Naive thymus-derived CD4-positive, alpha-beta T cell (primary cell): ENCODE measurements at regions of chr6 and their contacts with region 1.

Region 1: DNA sequence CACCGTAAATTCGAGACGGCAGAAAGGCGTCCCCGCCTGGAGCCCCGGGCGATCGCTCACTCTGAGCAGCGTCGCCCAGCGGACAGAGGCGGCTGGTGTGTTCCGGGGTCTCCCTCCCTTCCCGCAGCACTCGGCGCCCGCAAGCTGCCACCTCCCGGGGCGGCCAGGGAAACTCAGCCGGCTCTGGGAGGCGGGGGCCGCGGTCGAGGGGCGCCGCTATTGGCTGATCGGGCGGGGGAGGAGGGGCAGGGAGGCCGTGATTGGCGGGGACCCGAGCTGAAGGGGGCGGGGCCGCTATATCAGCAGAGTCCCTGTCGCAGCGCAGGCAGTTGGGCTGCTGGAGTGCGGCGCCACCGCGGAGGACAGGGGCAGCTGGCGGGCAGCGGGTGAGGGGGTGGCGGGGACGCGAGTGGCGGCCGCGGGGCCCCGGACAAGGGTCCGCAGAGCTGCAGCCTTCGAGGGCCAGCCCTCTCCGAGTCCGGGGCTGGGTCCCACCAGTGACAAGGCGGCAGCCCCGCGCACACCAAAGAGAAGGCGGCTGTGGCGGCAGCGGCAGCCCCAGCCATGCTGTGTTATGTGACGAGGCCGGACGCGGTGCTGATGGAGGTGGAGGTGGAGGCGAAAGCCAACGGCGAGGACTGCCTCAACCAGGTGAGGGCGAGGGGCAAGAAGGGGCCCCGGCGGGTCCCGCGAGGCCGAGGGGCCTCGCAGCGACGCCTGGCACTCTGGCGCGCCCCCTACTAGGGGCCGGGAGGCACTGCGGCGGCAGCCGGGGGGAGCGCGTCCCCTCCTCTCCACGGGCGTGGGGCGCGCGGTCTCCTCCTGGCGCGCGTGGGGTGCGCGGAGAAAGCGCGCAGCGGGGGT is at the start of gene MYLIP:
- DNase-seq: peak; percentile 93 to 97 (median 96)
- ATAC-seq: peak; percentile 93
- H3K4me3 ChIP-seq: peak within 1 kb of the TSS; percentile 91
- H3K4me3 Mint-ChIP-seq: peak within 1 kb of the TSS; percentile 93 to 100 (median 96)
- H3K27ac ChIP-seq: peak within 1 kb of the TSS; percentile 97
- H3K27ac Mint-ChIP-seq: peak within 1 kb of the TSS; percentile 76 to 98 (median 95)
- H3K4me1 ChIP-seq: peaks cover 30 to 39% of the 10 kb centered on the region in 2 donors
- H3K4me1 Mint-ChIP-seq: peaks cover 20 to 50% (median 35%) of the 10 kb centered on the region in 7 donors
- H3K27me3 ChIP-seq: no peaks in the 10 kb centered on the region
- H3K27me3 Mint-ChIP-seq: peaks cover 0 to 25% (median 0%) of the 10 kb centered on the region in 5 donors
- total RNA-seq, gene MYLIP: 17.8 to 215 (median 23.0) TPM

Region 2: GRCh38 chr6:15662326-15663129 is 466.5 kb before region 1 on chr6 and contains the start of gene DTNBP1:
- CTCF ChIA-PET with region 1: no interaction called
- POLR2A ChIA-PET with region 1: no interaction called
- intact Hi-C with region 1: loop called (anchors 1 to 2 kb)
- DNase-seq: peak; percentile 74 to 93 (median 84)
- ATAC-seq: peak; percentile 90
- H3K4me3 ChIP-seq: peak within 1 kb of the TSS; percentile 82
- H3K4me3 Mint-ChIP-seq: peak within 1 kb of the TSS; percentile 75 to 93 (median 88)
- H3K27ac ChIP-seq: peak within 1 kb of the TSS; percentile 71
- H3K27ac Mint-ChIP-seq: peak within 1 kb of the TSS; percentile 71 to 90 (median 82)
- H3K4me1 ChIP-seq: peaks cover 11 to 20% of the 10 kb centered on the region in 2 donors
- H3K4me1 Mint-ChIP-seq: peaks cover 20 to 47% (median 39%) of the 10 kb centered on the region in 7 donors
- H3K27me3 ChIP-seq: no peaks in the 10 kb centered on the region
- H3K27me3 Mint-ChIP-seq: peaks cover 0 to 20% (median 4%) of the 10 kb centered on the region in 5 donors
- total RNA-seq, gene DTNBP1: 19.8 to 30.8 (median 25.3) TPM

Region 3: DNA sequence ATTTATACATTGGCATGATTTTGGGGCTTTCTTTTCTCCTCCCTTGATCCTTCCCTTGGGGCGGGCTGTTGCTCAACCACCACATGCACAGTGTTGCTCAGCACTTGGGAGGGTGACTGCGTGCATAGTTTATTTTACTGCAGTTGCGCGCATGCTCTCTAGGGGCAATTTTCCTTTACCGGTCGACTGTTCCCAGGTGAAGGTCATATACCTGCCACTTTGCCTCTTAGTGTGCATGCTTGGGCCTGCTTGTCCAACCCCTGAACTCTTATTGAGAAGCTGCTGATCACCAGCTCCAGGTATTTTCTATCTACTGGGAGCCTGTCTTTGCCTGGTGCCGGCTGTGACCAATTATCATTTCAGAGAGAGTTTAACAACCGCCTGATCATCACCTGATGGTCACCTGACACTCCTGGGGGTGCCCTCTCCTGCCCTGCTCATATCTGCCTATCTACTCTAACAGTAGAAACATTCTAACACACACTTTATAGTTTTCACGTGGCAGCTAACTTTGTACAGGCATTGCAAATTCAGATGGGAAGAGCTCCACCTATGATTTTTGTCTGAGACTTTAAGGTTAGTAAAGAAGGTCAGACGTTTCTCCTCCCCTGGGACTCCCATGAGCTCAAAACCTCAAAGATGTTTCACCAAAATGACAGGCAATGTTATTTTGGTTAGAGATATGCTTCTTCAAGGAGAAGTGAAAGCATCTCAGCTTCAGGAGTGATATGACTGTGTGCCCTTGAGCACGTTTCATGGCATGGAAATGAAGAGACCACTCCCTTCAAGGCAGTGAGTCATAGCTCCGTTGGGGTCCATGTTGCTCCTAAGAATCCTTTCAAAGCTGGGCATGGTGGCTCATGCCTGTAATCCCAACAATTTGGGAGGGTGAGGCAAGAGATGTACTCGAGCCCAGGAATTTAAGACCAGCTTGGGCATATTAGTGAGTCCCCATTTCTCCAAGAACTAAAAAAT is 227.6 kb before region 1 on chr6:
- CTCF ChIA-PET with region 1: no interaction called
- POLR2A ChIA-PET with region 1: no interaction called
- intact Hi-C with region 1: loop called in 1 of 2 experiments (anchors 2 kb)
- DNase-seq: peak in 1 of 9 donors; percentile 34
- ATAC-seq: peak; percentile 80
- H3K4me3 ChIP-seq: no peak overlapping the region
- H3K4me3 Mint-ChIP-seq: peak overlapping the region in 1 of 10 donors; percentile 70
- H3K27ac ChIP-seq: no peak overlapping the region
- H3K27ac Mint-ChIP-seq: peak overlapping the region in 1 of 9 donors; percentile 92
- H3K4me1 ChIP-seq: no peaks in the 10 kb centered on the region
- H3K4me1 Mint-ChIP-seq: peaks cover 0 to 35% (median 0%) of the 10 kb centered on the region in 7 donors
- H3K27me3 ChIP-seq: no peaks in the 10 kb centered on the region
- H3K27me3 Mint-ChIP-seq: peaks cover 0 to 7% (median 0%) of the 10 kb centered on the region in 5 donors

Region 4: DNA sequence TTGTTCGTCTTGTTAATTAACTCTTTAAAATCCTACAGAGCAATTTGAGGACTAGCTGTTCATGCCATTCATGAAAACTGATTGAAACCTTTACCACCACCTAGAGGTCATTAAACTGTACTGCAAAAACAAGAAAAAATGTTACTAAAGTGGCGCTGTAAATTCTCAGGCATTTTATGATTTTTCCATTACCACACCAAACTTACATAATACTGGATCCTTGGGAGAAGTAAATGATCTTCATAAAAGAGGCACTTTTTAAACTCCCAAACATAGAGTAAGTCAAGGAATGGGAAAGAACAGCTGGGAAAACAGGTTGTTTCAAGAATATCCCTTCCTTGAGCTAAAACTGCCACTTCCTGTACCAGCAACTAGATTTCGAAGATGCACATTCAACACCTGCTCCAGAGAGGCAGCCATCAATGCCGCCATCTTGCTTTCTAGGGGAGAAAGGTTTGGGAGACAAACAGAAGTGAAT is 54.2 kb after region 1 on chr6:
- CTCF ChIA-PET with region 1: interaction called, 12 read pairs
- POLR2A ChIA-PET with region 1: interaction called, 21 read pairs
- intact Hi-C with region 1: loop called (anchors 1 kb)
- DNase-seq: peak in 6 of 9 donors; percentile 25 to 64 (median 58)
- ATAC-seq: peak; percentile 35
- H3K4me3 ChIP-seq: no peak overlapping the region
- H3K4me3 Mint-ChIP-seq: peak overlapping the region in 5 of 10 donors; percentile 1 to 62 (median 39)
- H3K27ac ChIP-seq: no peak overlapping the region
- H3K27ac Mint-ChIP-seq: peak overlapping the region in 8 of 9 donors; percentile 9 to 73 (median 64)
- H3K4me1 ChIP-seq: peaks cover 10 to 21% of the 10 kb centered on the region in 2 donors
- H3K4me1 Mint-ChIP-seq: peaks cover 5 to 50% (median 43%) of the 10 kb centered on the region in 7 donors
- H3K27me3 ChIP-seq: no peaks in the 10 kb centered on the region
- H3K27me3 Mint-ChIP-seq: peaks cover 0 to 19% (median 0%) of the 10 kb centered on the region in 5 donors

Region 5: DNA sequence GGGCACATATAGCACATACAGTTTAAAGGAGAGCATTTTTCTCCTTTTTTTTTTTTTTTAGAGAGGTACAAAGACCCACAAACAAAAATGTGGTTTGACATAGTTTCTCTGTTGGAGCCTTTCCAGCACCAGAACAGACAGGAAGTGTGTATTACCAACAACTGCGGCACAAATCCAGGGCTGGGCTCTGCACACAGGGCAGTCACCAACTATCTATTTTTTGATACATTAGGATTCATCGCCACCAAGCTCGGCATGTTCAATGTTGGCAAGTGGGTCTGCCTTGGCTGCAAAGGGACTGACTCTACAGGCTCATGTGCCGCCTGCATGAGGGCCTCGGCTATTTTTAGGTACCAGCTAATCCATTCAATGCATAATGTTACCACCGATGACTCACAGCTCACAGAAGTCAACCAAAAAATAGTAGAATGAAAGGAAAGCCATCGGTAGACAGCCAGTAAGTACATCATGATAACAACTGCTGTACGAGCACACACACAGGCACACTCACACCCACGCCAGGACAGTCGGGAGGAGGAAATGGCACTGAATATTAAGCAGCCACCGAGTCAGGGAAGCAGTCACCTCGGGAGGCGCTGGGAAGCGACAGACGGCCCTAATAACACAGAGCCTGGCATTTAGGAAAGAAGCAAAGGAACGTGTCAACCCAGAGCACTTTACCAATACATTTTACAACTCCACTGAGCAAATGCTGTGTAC is 191.0 kb after region 1 on chr6:
- CTCF ChIA-PET with region 1: no interaction called
- POLR2A ChIA-PET with region 1: interaction called, 3 read pairs
- intact Hi-C with region 1: loop called (anchors 1 to 2 kb)
- DNase-seq: peak; percentile 33 to 91 (median 79)
- ATAC-seq: peak; percentile 70
- H3K4me3 ChIP-seq: peak overlapping the region; percentile 43
- H3K4me3 Mint-ChIP-seq: peak overlapping the region; percentile 67 to 86 (median 78)
- H3K27ac ChIP-seq: peak overlapping the region; percentile 84
- H3K27ac Mint-ChIP-seq: peak overlapping the region; percentile 91 to 97 (median 95)
- H3K4me1 ChIP-seq: peaks cover 58 to 72% of the 10 kb centered on the region in 2 donors
- H3K4me1 Mint-ChIP-seq: peaks cover 41 to 78% (median 74%) of the 10 kb centered on the region in 7 donors
- H3K27me3 ChIP-seq: no peaks in the 10 kb centered on the region
- H3K27me3 Mint-ChIP-seq: no peaks in the 10 kb centered on the region

Region 6: GRCh38 chr6:16770701-16771569 is 641.9 kb after region 1 on chr6:
- CTCF ChIA-PET with region 1: no interaction called
- POLR2A ChIA-PET with region 1: no interaction called
- intact Hi-C with region 1: loop called in 1 of 2 experiments (anchors 5 kb)
- DNase-seq: peak; percentile 56 to 79 (median 73)
- ATAC-seq: peak; percentile 95
- H3K4me3 ChIP-seq: no peak overlapping the region
- H3K4me3 Mint-ChIP-seq: peak overlapping the region in 4 of 10 donors; percentile 22 to 65 (median 41)
- H3K27ac ChIP-seq: no peak overlapping the region
- H3K27ac Mint-ChIP-seq: peak overlapping the region in 6 of 9 donors; percentile 3 to 86 (median 75)
- H3K4me1 ChIP-seq: peaks cover 24 to 34% of the 10 kb centered on the region in 2 donors
- H3K4me1 Mint-ChIP-seq: peaks cover 25 to 51% (median 42%) of the 10 kb centered on the region in 7 donors
- H3K27me3 ChIP-seq: no peaks in the 10 kb centered on the region
- H3K27me3 Mint-ChIP-seq: peaks cover 0 to 5% (median 0%) of the 10 kb centered on the region in 5 donors

Region 7: DNA sequence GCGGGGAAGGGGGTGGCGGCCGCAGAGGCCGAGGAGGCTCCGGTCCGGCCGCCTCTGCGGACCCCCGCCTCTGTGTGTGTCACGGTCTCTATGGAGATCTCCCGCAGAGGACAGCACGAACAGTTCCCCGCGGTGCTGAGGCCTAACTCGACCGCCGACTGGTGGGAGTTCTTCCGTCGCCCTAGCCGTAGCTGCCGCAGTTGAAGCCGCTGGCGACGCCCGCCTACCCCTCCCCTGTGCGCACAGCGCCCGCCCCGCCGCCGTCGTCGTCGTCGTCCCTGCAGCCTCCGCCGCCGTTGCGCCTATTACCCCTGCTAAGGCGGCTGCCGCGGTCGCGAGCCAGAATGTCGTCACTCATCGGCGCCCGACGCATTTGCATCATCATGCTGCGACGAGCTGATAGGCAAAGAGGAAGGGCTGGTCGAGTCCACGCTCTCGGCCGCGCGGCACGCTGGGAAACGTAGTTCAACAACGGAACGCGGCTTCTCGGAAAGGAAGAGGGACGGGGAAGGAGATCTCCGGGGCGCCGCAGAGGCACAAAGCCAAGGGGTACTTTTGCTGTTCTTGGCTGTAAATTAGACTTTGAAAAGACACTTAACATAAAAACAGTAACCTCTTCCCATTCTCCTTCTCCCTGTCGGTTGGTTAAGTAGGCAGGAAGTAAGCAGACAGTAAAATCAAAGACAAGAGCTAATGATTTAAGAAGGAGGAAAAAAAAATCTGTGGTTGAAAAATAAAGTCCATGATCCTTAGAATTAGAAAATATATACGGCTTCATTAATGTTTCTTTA is 1577.8 kb after region 1 on chr6 and contains the start of gene NUP153:
- CTCF ChIA-PET with region 1: no interaction called
- POLR2A ChIA-PET with region 1: no interaction called
- intact Hi-C with region 1: loop called in 1 of 2 experiments (anchors 10 kb)
- DNase-seq: peak; percentile 98 to 100 (median 99)
- ATAC-seq: peak; percentile 85
- H3K4me3 ChIP-seq: peak within 1 kb of the TSS; percentile 94
- H3K4me3 Mint-ChIP-seq: peak within 1 kb of the TSS; percentile 86 to 97 (median 94)
- H3K27ac ChIP-seq: peak within 1 kb of the TSS; percentile 100
- H3K27ac Mint-ChIP-seq: peak within 1 kb of the TSS; percentile 92 to 98 (median 95)
- H3K4me1 ChIP-seq: peaks cover 24 to 28% of the 10 kb centered on the region in 2 donors
- H3K4me1 Mint-ChIP-seq: peaks cover 13 to 53% (median 37%) of the 10 kb centered on the region in 7 donors
- H3K27me3 ChIP-seq: no peaks in the 10 kb centered on the region
- H3K27me3 Mint-ChIP-seq: peaks cover 0 to 2% (median 0%) of the 10 kb centered on the region in 5 donors
- total RNA-seq, gene NUP153: 47.7 to 90.9 (median 53.0) TPM